Adrenal gland (tissue), 19 donors: ENCODE measurements at regions of chr3 and their contacts with region 1.

Region 1: GRCh38 chr3:42247576-42248027 is 18.4 kb downstream of the CCK start:
- DNase-seq: peak; percentile 30 to 84 (median 50)
- H3K4me3 ChIP-seq: no peak overlapping the region
- H3K27ac ChIP-seq: no peak overlapping the region
- H3K4me1 ChIP-seq: no peaks in the 10 kb centered on the region
- H3K27me3 ChIP-seq: no peaks in the 10 kb centered on the region
- CTCF ChIP-seq: peak; percentile 56 to 78 (median 67)
- POLR2A ChIP-seq: no peak

Region 2: DNA sequence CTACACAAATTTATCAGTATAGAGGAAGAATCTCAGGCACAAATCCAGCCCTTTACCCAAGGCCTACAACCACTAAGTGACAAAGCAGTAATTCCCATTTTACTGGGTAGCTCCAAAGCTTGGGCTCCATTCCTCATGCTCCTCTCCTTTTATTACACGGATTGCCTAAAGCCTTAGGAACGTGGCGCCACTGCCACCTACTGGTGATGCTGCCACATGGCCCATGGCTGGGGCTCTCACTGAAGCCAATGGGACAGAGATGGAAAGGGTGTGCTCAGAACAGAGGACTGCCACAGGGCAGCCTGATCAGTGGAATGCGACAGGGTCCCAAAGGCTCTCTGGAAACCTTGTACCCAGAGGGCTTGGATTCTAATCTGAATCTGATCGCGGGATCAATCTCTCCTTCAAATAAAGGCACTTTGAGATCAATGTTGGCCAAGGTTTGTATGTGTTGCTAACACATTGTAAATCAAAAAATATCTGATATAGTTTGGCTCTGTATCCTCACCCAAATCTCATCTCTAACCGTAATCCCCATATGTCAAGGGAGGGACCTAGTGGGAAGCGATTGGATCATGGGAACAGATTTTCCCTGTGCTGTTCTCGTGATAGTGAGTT is 196.3 kb after region 1 on chr3:
- intact Hi-C with region 1: loop called (anchors 2 to 5 kb)
- DNase-seq: peak; percentile 73 to 93 (median 84)
- H3K4me3 ChIP-seq: no peak overlapping the region
- H3K27ac ChIP-seq: no peak overlapping the region
- H3K4me1 ChIP-seq: no peaks in the 10 kb centered on the region
- H3K27me3 ChIP-seq: no peaks in the 10 kb centered on the region
- CTCF ChIP-seq: peak; percentile 88 to 97 (median 95)
- POLR2A ChIP-seq: no peak

Region 3: DNA sequence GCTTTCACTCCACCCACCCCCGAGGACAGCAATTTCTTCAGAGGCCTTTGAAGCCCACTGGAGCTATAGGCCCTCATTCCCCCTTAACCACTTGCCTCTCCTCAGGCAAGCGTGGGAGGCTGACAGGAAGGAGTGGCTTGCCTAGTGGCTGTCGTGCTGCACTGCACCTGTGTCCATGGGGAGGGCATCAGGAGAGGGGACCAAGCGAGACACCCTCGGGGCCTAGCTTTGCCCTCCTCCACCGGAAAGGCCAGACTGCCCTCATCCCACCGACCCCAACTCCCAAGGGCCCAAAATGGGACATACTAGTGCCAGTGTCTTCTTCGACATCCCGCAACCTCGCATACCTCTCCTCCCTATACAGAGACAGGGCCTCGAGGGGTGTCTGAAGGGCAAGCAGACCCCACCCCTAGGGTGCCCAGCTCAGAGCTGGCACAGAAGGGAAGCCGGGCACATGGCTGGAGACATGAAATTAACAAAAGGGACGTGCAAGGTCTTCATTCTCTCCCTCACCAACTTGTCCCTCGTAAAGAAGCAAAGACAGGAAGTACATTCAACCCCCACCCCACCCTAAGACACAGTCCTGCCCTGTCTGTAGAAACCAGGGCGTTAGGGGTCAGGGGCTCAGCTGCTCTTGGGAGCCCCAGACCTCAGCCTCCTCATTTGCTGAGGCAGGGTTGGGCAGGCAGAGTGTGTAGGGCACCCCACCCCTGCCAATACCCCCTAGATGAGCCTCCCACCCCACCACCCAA is 279.2 kb after region 1 on chr3:
- intact Hi-C with region 1: loop called in 1 of 2 experiments (anchors 10 kb)
- DNase-seq: no peak
- H3K4me3 ChIP-seq: no peak overlapping the region
- H3K27ac ChIP-seq: no peak overlapping the region
- H3K4me1 ChIP-seq: no peaks in the 10 kb centered on the region
- H3K27me3 ChIP-seq: no peaks in the 10 kb centered on the region
- CTCF ChIP-seq: no peak
- POLR2A ChIP-seq: no peak